CD14-positive monocyte (primary cell): ENCODE measurements at regions of chr11 and their contacts with region 1.

Region 1: GRCh38 chr11:575996-576768 is at the start of gene PHRF1:
- DNase-seq: peak; percentile 91 to 96 (median 96)
- H3K4me3 ChIP-seq: peak within 1 kb of the TSS; percentile 79 to 91 (median 79)
- H3K4me3 Mint-ChIP-seq: peak within 1 kb of the TSS; percentile 93 to 98
- H3K27ac ChIP-seq: peak within 1 kb of the TSS; percentile 80 to 96
- H3K27ac Mint-ChIP-seq: peak within 1 kb of the TSS; percentile 91 to 100 (median 99)
- H3K4me1 ChIP-seq: peaks cover 22 to 40% of the 10 kb centered on the region in 2 donors
- H3K4me1 Mint-ChIP-seq: peaks cover 37% of the 10 kb centered on the region
- H3K27me3 ChIP-seq: peaks cover 8 to 28% of the 10 kb centered on the region in 2 donors
- H3K27me3 Mint-ChIP-seq: peaks cover 22 to 38% (median 32%) of the 10 kb centered on the region in 3 donors
- CTCF ChIP-seq: no peak
- polyA plus RNA-seq, gene PHRF1: 1.3 to 11.1 (median 3.3) TPM

Region 2: DNA sequence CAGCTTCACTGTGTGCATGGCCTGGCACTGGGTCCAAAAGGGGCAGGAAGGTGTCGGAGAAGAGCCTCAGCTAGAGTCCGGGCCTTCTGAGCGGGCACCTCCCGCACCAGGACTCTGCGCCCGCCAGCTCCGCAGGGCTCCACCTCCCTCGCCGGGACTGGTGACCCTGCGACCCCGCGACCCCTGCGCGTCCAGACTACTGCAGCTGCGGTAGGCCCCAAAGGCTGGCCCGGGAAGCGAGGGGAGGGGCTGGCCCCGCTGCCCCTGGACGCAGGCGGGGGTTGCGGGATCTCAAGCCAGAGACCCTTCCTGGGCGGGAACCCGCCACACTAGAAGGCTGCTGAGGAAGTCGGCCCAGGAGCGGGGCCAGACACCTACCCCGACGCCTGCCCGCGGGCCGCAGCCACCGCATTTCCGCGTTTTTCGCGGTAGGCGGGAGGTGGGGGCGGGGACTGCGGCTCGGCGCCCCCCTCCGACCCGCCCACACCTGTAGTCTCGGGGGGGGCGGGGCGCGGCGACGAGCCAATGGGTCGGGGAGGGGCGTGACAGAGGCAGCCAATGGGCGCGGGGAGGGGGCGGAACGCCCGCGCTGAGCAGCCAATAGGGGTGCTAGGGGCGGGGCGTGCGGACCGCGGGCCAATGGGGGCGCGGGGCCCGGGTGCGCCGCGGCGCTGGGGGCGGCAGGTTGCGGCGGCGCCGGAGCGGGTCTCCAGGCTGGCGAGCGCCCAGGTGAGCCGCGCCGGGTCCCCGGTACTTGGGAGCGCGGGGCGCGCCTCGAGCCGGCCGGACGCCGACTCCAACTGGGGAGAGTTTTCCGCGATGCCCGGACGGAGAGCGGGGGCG is 15.7 kb before region 1 on chr11 and contains the starts of genes LMNTD2 and RASSF7:
- intact Hi-C with region 1: loop called in 1 of 2 experiments (anchors 2 kb)
- DNase-seq: peak; percentile 81 to 90 (median 85)
- H3K4me3 ChIP-seq: peak within 1 kb of the TSS; percentile 54 to 89 (median 73)
- H3K4me3 Mint-ChIP-seq: peak within 1 kb of the TSS; percentile 81 to 89
- H3K27ac ChIP-seq: peak within 1 kb of the TSS in 1 of 2 donors; percentile 62
- H3K27ac Mint-ChIP-seq: peak within 1 kb of the TSS in 5 of 7 donors; percentile 40 to 77 (median 64)
- H3K4me1 ChIP-seq: peaks cover 14 to 35% of the 10 kb centered on the region in 2 donors
- H3K4me1 Mint-ChIP-seq: peaks cover 18% of the 10 kb centered on the region
- H3K27me3 ChIP-seq: peaks cover 4 to 36% of the 10 kb centered on the region in 2 donors
- H3K27me3 Mint-ChIP-seq: peaks cover 24 to 42% (median 36%) of the 10 kb centered on the region in 3 donors
- CTCF ChIP-seq: no peak
- polyA plus RNA-seq, gene LMNTD2: 0.67 to 10.6 (median 1.2) TPM
- polyA plus RNA-seq, gene RASSF7: 10.0 to 26.5 (median 12.4) TPM

Region 3: DNA sequence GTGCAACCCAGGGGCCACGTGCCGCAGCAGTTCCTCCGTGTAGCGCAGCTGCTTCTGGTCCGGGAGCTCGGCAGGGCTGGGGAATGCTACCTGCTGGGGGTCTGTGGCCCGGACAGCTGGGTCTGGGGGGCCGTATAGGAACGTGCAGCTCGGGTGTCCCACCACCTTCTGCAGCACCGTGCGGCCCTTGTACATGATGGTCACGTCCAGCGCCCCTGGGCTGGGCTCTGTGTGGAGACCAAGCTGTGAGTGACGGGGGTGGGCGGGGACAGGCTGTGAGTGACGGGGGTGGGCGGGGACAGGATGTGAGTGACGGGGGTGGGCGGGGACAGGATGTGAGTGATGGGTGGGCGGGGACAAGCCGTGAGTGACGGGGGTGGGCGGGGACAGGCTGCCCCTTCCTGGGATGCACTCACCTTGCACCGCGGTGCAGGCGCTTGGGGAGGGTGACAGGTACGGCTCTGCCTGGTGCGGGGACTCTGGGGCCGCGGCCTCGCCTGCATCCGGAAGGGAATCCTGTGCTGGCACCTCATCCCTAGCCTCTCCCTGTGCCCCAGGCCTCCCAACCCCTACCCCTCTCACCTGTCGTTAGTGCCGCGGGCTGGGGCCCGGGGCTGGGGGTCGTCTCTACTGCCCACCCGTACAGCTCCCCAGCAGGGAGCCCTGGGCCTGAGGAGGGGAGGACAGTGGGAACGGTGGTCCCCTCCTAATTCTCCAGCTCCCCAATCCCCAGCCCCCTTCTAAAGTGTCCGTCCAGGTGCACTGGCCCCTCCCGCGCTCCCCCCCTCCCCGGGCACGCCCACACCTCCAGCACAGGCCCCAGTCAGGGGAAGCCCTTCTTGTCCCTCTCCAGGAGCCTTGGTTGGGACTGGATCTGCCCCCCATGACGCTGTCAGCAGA is 37.4 kb after region 1 on chr11:
- intact Hi-C with region 1: loop called (anchors 5 kb)
- DNase-seq: peak; percentile 35 to 77 (median 59)
- H3K4me3 ChIP-seq: peak overlapping the region in 1 of 3 experiments; percentile 90
- H3K4me3 Mint-ChIP-seq: peak overlapping the region; percentile 46 to 67
- H3K27ac ChIP-seq: peak overlapping the region; percentile 59 to 93
- H3K27ac Mint-ChIP-seq: peak overlapping the region; percentile 60 to 94 (median 91)
- H3K4me1 ChIP-seq: peaks cover 38 to 40% of the 10 kb centered on the region in 2 donors
- H3K4me1 Mint-ChIP-seq: peaks cover 26% of the 10 kb centered on the region
- H3K27me3 ChIP-seq: no peaks in the 10 kb centered on the region
- H3K27me3 Mint-ChIP-seq: peaks cover 0 to 1% (median 0%) of the 10 kb centered on the region in 3 donors
- CTCF ChIP-seq: no peak

Region 4: GRCh38 chr11:623999-624704 is 48.0 kb after region 1 on chr11:
- intact Hi-C with region 1: no loop called
- DNase-seq: peak in 2 of 3 donors; percentile 8 to 38
- H3K4me3 ChIP-seq: no peak overlapping the region
- H3K4me3 Mint-ChIP-seq: no peak overlapping the region
- H3K27ac ChIP-seq: no peak overlapping the region
- H3K27ac Mint-ChIP-seq: peak overlapping the region in 1 of 7 donors; percentile 30
- H3K4me1 ChIP-seq: peaks cover 17 to 27% of the 10 kb centered on the region in 2 donors
- H3K4me1 Mint-ChIP-seq: peaks cover 29% of the 10 kb centered on the region
- H3K27me3 ChIP-seq: peaks cover 6 to 34% of the 10 kb centered on the region in 2 donors
- H3K27me3 Mint-ChIP-seq: peaks cover 33 to 40% (median 39%) of the 10 kb centered on the region in 3 donors
- CTCF ChIP-seq: no peak

Region 5: GRCh38 chr11:1060824-1061616 is 484.8 kb after region 1 on chr11:
- intact Hi-C with region 1: no loop called
- DNase-seq: no peak
- H3K4me3 ChIP-seq: no peak overlapping the region
- H3K4me3 Mint-ChIP-seq: no peak overlapping the region
- H3K27ac ChIP-seq: no peak overlapping the region
- H3K27ac Mint-ChIP-seq: no peak overlapping the region
- H3K4me1 ChIP-seq: no peaks in the 10 kb centered on the region
- H3K4me1 Mint-ChIP-seq: peaks cover 6% of the 10 kb centered on the region
- H3K27me3 ChIP-seq: peaks cover 0 to 5% of the 10 kb centered on the region in 2 donors
- H3K27me3 Mint-ChIP-seq: peaks cover 4 to 21% (median 20%) of the 10 kb centered on the region in 3 donors
- CTCF ChIP-seq: no peak